CD8-positive, alpha-beta memory T cell (primary cell): ENCODE measurements at regions of chr7 and their contacts with region 1.

Region 1: GRCh38 chr7:50206453-50207250 is 97.9 kb upstream of the IKZF1 start:
- DNase-seq: peak; percentile 36 to 86 (median 61)
- H3K4me3 ChIP-seq: peak overlapping the region; percentile 18
- H3K4me3 Mint-ChIP-seq: peak overlapping the region; percentile 2 to 82 (median 76)
- H3K27ac ChIP-seq: no peak overlapping the region
- H3K27ac Mint-ChIP-seq: peak overlapping the region; percentile 45 to 95 (median 83)
- H3K4me1 ChIP-seq: peaks cover 66% of the 10 kb centered on the region
- H3K4me1 Mint-ChIP-seq: peaks cover 62 to 74% (median 74%) of the 10 kb centered on the region in 3 donors
- H3K27me3 ChIP-seq: no peaks in the 10 kb centered on the region
- H3K27me3 Mint-ChIP-seq: peaks cover 0 to 2% of the 10 kb centered on the region in 2 donors

Region 2: DNA sequence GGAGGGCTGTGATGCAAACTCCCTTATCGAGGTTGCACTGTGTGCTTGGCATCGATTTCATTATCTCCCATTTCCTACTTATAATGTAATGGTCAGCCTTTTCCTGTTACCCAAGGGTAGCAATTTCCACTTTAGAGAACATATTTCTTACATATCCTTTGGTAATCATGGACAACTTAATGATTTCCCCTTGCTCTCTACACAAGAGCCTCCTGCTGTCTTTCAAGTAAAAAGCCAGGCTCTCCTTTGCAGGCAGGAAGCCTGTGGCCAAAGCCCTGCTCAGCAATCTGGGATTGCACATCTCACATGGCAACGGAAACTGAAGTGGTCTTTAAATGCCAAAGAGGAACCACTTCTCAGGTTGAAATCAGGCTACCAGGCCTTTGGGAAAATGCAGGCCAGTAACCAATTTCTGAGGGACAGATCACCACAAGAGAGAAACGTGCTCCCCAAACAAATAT is 11.2 kb after region 1 on chr7:
- CTCF ChIA-PET with region 1: interaction called, 11 read pairs
- POLR2A ChIA-PET with region 1: no interaction called
- DNase-seq: no peak
- H3K4me3 ChIP-seq: no peak overlapping the region
- H3K4me3 Mint-ChIP-seq: no peak overlapping the region
- H3K27ac ChIP-seq: no peak overlapping the region
- H3K27ac Mint-ChIP-seq: peak overlapping the region in 1 of 8 donors; percentile 41
- H3K4me1 ChIP-seq: peaks cover 28% of the 10 kb centered on the region
- H3K4me1 Mint-ChIP-seq: peaks cover 20 to 38% (median 26%) of the 10 kb centered on the region in 3 donors
- H3K27me3 ChIP-seq: no peaks in the 10 kb centered on the region
- H3K27me3 Mint-ChIP-seq: peaks cover 0 to 2% of the 10 kb centered on the region in 2 donors

Region 3: DNA sequence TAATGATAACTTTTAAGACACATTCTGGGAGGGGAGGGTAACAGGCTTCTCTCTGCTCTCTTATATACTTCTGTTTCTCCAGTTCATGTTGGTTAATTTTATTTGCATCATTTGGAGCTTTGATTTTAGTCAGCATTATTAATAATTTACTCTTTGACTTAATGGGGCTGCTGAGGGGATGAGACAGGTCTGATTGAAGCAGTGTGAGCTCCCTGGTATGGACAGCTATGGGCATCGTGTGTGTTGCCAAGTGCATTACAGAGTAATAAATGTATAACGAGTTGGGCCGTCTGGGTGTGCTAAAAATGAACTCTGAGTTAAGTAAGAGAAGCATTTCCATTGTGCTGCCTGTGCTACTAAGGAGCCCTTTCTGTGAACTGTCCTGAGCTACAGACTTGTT is 66.2 kb after region 1 on chr7:
- CTCF ChIA-PET with region 1: interaction called, 50 read pairs
- POLR2A ChIA-PET with region 1: interaction called, 6 read pairs
- DNase-seq: no peak
- H3K4me3 ChIP-seq: no peak overlapping the region
- H3K4me3 Mint-ChIP-seq: no peak overlapping the region
- H3K27ac ChIP-seq: no peak overlapping the region
- H3K27ac Mint-ChIP-seq: peak overlapping the region in 3 of 8 donors; percentile 26 to 83 (median 61)
- H3K4me1 ChIP-seq: peaks cover 74% of the 10 kb centered on the region
- H3K4me1 Mint-ChIP-seq: peaks cover 58 to 81% (median 65%) of the 10 kb centered on the region in 3 donors
- H3K27me3 ChIP-seq: no peaks in the 10 kb centered on the region
- H3K27me3 Mint-ChIP-seq: no peaks in the 10 kb centered on the region

Region 4: DNA sequence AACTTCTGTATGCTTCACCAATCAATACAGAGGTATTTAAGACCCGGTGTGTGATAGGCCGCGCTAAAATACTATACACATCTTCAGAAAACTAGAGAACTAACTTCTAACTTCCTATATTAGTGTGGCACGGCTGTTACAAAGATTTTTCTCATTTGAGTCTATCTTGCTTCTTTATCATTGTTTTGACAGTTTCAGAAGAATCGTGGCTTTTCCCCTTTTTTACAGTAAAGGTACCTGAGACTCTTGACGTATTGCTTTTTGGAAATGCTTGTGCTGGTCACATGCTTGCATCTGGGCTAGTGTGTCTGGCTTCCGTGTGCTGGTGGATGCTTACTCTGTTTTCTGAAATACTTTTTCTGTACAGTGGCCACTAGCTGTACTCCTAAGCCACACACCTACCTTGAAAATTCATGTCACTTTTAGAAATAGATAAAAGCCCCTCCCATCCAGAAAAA is 110.6 kb after region 1 on chr7:
- CTCF ChIA-PET with region 1: interaction called, 33 read pairs
- POLR2A ChIA-PET with region 1: interaction called, 12 read pairs
- DNase-seq: peak in 3 of 5 donors; percentile 74 to 85 (median 74)
- H3K4me3 ChIP-seq: peak overlapping the region; percentile 57
- H3K4me3 Mint-ChIP-seq: peak overlapping the region; percentile 79 to 100 (median 98)
- H3K27ac ChIP-seq: peak overlapping the region; percentile 66
- H3K27ac Mint-ChIP-seq: peak overlapping the region; percentile 92 to 99 (median 98)
- H3K4me1 ChIP-seq: peaks cover 98% of the 10 kb centered on the region
- H3K4me1 Mint-ChIP-seq: peaks cover 95 to 100% (median 99%) of the 10 kb centered on the region in 3 donors
- H3K27me3 ChIP-seq: no peaks in the 10 kb centered on the region
- H3K27me3 Mint-ChIP-seq: no peaks in the 10 kb centered on the region

Region 5: DNA sequence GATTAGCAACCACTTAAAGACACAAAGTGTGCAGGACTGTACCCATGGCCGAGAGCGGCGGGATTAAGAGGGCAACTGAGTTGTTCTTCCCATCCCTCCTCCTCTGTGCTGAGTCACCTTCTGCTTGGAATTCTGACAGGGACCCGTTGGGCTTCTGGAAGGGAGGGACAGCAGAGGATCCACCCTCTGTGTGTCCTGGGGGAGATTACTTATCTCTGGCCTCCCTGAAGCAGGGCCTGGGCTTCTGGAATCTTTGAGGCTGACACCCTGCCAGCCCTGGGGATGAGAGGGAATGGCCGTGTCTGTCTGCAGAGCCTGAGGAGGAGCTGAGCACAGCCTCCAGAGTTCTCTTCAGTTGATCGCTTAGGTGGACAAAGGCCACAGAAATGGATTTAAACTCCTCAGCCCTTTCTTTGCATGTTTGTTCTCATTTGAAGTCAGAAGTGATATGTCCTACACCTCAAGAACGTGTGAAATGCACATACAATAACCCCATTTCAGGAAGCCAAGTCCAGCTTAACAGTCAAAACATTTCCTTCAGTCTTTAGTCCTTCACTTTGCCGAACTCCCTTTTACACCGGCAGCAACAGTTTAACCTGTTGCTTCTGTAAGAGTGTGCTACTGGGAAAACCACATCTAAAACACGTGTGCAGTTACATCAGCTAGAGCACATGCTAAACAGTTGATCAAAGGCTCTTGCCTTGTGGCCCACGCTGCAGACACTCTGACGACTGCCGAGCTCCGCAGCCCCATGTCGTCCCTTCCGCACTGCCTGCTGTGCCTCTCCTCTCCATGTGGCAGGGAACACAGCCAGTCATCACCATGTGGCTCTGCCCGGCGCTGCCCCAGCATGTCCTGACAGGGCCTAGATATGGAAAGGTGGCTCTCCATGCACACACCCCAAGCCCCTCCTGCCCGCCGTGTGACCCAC is 153.6 kb after region 1 on chr7:
- CTCF ChIA-PET with region 1: interaction called, 54 read pairs
- POLR2A ChIA-PET with region 1: interaction called, 4 read pairs
- DNase-seq: peak; percentile 72 to 91 (median 87)
- H3K4me3 ChIP-seq: peak overlapping the region; percentile 14
- H3K4me3 Mint-ChIP-seq: peak overlapping the region; percentile 60 to 85 (median 76)
- H3K27ac ChIP-seq: peak overlapping the region; percentile 71
- H3K27ac Mint-ChIP-seq: peak overlapping the region in 7 of 8 donors; percentile 97 to 100 (median 100)
- H3K4me1 ChIP-seq: peaks cover 98% of the 10 kb centered on the region
- H3K4me1 Mint-ChIP-seq: peaks cover 93 to 99% (median 98%) of the 10 kb centered on the region in 3 donors
- H3K27me3 ChIP-seq: no peaks in the 10 kb centered on the region
- H3K27me3 Mint-ChIP-seq: no peaks in the 10 kb centered on the region

Region 6: DNA sequence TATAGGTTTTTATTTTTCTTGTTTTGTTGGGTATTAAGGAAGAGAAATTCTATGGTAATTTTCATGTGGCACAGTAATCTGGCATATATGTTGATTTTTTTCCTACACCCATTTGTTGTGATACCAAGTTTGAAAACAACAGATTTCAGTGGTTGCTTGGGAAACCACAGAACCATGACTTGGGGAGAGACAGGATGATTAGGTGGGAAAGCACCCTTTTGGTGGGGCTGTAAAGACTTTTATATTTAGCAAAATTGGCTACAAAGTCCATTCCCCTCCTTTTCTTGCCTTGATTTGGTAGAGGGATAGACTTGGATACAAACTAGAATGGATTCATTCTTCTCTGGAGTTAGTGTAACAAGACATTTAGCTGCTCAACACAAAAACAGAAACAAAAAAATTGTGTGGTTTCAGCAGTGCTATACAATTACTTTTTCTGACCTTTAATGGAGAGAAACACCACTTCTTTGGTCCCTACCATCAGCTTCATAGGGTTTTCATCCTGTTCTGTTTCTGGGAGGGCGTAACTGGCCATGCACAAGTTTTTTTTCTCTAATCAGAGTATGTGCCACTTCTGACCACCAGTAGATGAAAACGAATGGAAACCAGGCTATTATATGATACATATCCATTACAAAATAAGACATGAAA is 190.8 kb after region 1 on chr7:
- CTCF ChIA-PET with region 1: interaction called, 16 read pairs
- POLR2A ChIA-PET with region 1: no interaction called
- DNase-seq: peak in 4 of 5 donors; percentile 19 to 65 (median 36)
- H3K4me3 ChIP-seq: no peak overlapping the region
- H3K4me3 Mint-ChIP-seq: peak overlapping the region in 5 of 7 donors; percentile 65 to 76 (median 69)
- H3K27ac ChIP-seq: peak overlapping the region; percentile 5
- H3K27ac Mint-ChIP-seq: peak overlapping the region; percentile 63 to 94 (median 94)
- H3K4me1 ChIP-seq: peaks cover 62% of the 10 kb centered on the region
- H3K4me1 Mint-ChIP-seq: peaks cover 75 to 85% (median 82%) of the 10 kb centered on the region in 3 donors
- H3K27me3 ChIP-seq: no peaks in the 10 kb centered on the region
- H3K27me3 Mint-ChIP-seq: peaks cover 0 to 4% of the 10 kb centered on the region in 2 donors

Region 7: GRCh38 chr7:50426280-50427045 is 219.8 kb after region 1 on chr7:
- CTCF ChIA-PET with region 1: interaction called, 14 read pairs
- POLR2A ChIA-PET with region 1: no interaction called
- DNase-seq: no peak
- H3K4me3 ChIP-seq: no peak overlapping the region
- H3K4me3 Mint-ChIP-seq: no peak overlapping the region
- H3K27ac ChIP-seq: no peak overlapping the region
- H3K27ac Mint-ChIP-seq: no peak overlapping the region
- H3K4me1 ChIP-seq: no peaks in the 10 kb centered on the region
- H3K4me1 Mint-ChIP-seq: no peaks in the 10 kb centered on the region
- H3K27me3 ChIP-seq: no peaks in the 10 kb centered on the region
- H3K27me3 Mint-ChIP-seq: no peaks in the 10 kb centered on the region